ENCODE measurements at regions of chr16 and their contacts with region 1.

Region 1: GRCh38 chr16:23182460-23183309 is at the start of gene SCNN1G:
- DNase-seq: peak; percentile 79 to 91
- ATAC-seq: peak; percentile 98
- total RNA-seq, gene SCNN1G: 4.9 to 90.3 TPM

Region 2: DNA sequence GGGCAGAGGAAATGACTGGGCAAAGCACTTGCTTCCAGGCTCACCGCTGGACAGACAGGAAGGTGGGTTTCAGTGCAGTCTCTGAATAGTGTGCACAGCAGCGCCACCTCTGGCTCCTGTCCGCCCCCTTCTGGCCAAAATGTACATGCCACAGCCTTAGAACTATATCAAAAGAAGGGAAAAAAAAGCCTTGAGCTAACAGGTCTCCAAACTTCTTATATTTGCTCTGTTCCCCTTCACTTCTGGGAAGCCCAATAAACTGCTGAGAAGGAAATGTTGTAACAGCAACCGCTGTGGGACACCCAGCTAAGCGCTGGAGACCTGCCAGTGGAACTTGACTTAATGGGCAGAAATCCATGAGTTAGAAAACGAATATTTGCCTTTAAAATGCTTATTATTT is 252.8 kb after region 1 on chr16:
- intact Hi-C with region 1: loop called (anchors 5 to 10 kb)
- DNase-seq: peak; percentile 56 to 79
- ATAC-seq: peak; percentile 62

Measured in left colon (tissue), 2 donors.